ENCODE measurements at regions of chr12 and their contacts with region 1.

Region 1: DNA sequence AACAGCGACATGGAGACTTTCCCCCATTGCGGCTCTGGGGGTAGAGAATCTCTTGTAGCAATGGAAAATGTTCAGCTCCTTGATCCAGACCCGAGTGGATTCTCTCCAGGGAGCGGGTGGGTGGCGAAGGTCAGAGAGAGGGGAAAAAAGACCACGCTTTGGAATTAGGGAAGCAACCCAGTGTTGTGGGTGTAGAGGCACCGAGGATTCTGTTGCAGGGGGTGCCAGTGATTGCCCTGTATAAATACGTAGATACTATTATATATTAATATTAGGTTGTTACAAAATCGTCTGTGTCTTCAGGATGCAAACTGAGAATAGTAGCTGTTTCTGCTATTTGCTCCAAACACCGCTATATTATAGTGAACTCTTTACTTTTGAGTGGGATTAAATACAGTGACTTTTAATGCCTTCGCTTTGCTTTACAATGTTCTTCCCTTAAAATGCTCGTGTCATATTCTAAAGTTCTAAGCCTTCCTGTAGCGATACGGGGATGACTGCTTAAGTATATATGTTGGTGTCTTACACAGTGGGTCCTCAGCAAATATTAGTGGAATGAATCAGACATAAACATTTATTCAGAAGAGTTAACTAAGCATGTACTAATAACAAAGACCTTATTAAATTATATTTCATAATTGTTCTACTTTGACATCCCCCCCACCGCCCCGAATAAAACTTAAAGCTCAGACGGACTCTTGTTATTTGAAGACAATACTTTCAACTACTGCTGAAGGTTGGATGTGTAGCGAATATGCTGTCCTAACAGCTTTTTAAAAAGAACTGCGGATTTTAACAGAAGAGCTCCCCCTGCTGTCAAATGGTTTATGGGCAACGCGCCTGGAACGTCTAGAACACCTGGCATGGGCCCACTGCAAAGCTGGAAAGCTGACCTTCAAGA is 136.4 kb upstream of the KRAS start:
- DNase-seq: peak; percentile 92
- ATAC-seq: peak; percentile 72
- H3K4me3 ChIP-seq: peak overlapping the region; percentile 70 to 97
- H3K27ac ChIP-seq: peak overlapping the region; percentile 85
- H3K4me1 ChIP-seq: peaks cover 12% of the 10 kb centered on the region
- H3K27me3 ChIP-seq: no peaks in the 10 kb centered on the region
- CTCF ChIP-seq: peak; percentile 98

Region 2: DNA sequence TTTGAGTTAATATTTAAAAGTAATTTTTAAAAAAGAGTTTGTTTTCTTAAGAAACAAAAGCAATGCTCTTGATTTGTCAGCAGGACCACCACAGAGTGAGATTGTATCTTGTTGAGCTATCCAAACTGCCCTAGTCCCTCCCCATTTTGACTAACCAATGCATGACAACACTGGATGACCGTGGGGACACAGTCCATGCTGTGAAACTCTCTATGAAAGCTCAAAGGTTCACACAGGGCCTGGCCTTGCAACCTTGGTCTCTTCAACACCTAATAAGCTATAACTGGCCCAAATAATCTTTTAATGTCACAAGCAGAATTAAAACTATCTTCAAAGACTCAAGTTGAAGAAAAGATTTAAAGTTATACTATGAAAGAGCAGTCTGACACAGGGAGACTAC is 178.5 kb before region 1 on chr12:
- CTCF ChIA-PET with region 1: interaction called, 3 read pairs
- POLR2A ChIA-PET with region 1: interaction called, 5 read pairs
- in situ Hi-C with region 1: no loop called
- intact Hi-C with region 1: loop called (anchors 1 kb)
- DNase-seq: no peak
- ATAC-seq: no peak
- H3K4me3 ChIP-seq: no peak overlapping the region
- H3K27ac ChIP-seq: no peak overlapping the region
- H3K4me1 ChIP-seq: no peaks in the 10 kb centered on the region
- H3K27me3 ChIP-seq: no peaks in the 10 kb centered on the region
- CTCF ChIP-seq: no peak